ENCODE measurements at regions of chr3 and their contacts with region 1.

Region 1: DNA sequence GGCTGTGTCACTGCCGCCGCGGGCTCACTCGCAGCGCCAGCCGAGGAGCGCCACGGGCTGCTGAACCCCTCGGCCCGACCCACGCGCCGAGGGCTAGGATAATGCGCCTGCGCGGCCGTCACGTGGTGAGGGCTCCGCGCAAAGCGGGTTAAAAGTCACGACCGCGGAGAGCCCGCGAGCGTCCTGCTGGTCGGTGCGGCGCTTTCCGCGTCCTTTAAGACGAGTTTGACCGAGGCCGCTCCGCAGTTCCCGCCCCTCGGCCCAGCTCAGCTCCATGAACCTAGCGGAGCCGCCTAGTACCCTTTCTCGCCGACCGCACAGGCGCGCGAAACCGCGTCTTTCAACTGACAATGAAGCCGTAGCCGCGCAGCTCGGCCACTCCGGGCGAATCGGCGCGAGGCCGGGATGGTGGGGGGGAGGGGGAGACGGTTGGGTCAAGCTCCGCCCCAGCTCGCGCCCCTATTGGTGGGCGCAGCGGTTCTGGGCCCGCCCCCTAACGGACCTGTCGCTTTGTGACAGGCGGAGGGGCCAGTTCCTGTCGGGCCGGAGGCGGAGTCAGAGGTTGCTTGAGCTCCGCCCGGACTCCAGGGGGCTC is 636 bp upstream of the STT3B start:
- DNase-seq: peak; percentile 99
- ATAC-seq: peak; percentile 87
- H3K4me3 ChIP-seq: peak overlapping the region; percentile 98
- H3K27ac ChIP-seq: peak overlapping the region; percentile 96
- H3K4me1 ChIP-seq: peaks cover 28% of the 10 kb centered on the region
- H3K27me3 ChIP-seq: no peaks in the 10 kb centered on the region
- CTCF ChIP-seq: no peak

Region 2: DNA sequence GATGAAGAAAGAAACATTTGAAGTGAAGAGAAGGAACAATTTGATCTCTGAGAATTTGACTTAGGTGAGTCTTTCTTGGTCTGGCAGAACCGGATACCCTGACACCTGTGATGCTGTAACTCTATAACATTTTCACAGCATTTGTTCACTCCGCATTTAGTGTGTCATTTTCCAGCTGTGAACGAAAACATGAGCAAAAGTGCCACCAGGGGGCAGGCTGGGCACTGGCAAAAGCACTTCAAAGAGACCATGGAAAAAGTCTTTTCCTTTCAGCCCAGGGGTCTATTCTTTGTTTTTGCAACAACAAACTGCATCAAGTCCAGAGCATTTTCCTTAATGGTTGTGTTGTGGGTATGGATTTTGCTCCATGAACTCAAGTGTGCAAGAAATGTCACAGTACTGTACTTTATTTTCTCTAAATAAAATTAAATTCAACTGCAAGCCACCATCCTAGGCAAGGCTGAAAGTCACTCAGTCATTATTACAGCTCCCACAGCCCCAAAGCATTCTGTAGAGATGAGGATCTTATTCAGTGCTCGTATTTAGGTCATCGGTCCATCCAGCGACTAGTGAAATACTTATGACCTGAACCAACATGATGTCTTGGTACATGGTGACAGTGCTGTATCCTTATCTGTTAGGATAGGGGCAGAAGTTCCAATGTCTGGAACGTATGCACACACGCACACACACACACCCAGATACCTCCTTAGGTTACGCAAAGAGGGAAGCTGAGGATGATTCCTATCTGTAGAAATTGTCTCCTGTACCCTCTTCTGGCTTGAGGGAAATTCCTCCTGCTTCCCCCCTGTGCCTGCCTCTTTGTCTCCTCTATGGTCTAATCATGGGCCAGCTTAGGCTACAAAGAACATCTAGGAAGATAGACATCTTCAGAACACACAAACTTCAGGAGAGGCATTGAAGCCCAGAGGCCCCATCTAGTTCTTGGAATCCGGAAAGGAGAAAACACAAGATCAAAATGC is 763.1 kb before region 1 on chr3:
- CTCF ChIA-PET with region 1: no interaction called
- POLR2A ChIA-PET with region 1: interaction called, 6 read pairs
- intact Hi-C with region 1: loop called (anchors 5 kb)
- DNase-seq: peak; percentile 87
- ATAC-seq: 0 out of 2 replicates have a peak, but pooled peaks have one; percentile 23
- H3K4me3 ChIP-seq: no peak overlapping the region
- H3K27ac ChIP-seq: no peak overlapping the region
- H3K4me1 ChIP-seq: peaks cover 34% of the 10 kb centered on the region
- H3K27me3 ChIP-seq: no peaks in the 10 kb centered on the region
- CTCF ChIP-seq: peak; percentile 96

Region 3: DNA sequence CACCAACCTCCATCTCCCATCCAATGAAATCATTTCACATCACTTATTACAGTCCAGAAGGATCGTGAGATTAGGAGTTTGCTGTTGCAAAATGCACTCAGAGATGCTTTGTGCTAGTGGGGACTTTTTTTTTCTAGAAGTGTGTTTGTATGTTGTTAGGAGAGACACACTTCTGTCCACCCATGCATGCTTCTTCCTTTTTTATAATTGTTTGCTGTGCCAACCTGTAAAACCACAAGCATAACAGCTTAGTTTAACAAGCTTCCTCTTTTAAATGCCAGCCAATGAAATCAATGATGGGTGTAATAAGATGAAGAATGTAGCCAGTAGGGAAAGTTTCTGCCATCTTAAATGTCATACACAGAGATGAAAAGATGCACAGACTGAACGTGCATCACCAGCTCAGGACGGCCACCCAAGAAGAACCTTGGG is 304.9 kb before region 1 on chr3:
- CTCF ChIA-PET with region 1: no interaction called
- POLR2A ChIA-PET with region 1: no interaction called
- intact Hi-C with region 1: loop called (anchors 5 kb)
- DNase-seq: peak; percentile 41
- ATAC-seq: peak; percentile 53
- H3K4me3 ChIP-seq: no peak overlapping the region
- H3K27ac ChIP-seq: no peak overlapping the region
- H3K4me1 ChIP-seq: no peaks in the 10 kb centered on the region
- H3K27me3 ChIP-seq: no peaks in the 10 kb centered on the region
- CTCF ChIP-seq: no peak

Region 4: DNA sequence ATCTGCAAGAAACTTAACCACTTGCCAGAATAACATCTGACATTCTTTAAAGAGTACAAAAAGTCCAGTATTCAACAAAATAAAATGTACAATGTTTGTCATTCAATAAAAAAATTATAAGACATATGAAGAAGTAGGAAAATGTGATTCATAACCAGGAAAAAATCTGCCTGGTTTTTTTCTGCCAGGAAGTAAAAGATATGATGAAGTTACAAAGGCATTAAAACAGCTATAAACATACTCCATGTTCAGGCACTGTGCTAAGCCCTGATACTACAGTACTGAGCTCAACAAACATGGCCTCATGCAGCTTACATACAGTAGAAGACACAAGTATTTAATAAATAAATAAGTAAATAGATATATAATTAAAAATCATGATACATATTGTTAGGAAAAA is 177.7 kb before region 1 on chr3:
- CTCF ChIA-PET with region 1: no interaction called
- POLR2A ChIA-PET with region 1: no interaction called
- intact Hi-C with region 1: loop called (anchors 5 kb)
- DNase-seq: peak; percentile 38
- ATAC-seq: peak; percentile 83
- H3K4me3 ChIP-seq: no peak overlapping the region
- H3K27ac ChIP-seq: no peak overlapping the region
- H3K4me1 ChIP-seq: peaks cover 5% of the 10 kb centered on the region; the same call in 1 of the 2 replicates
- H3K27me3 ChIP-seq: no peaks in the 10 kb centered on the region
- CTCF ChIP-seq: no peak

Region 5: GRCh38 chr3:31968927-31969418 is 436.9 kb after region 1 on chr3:
- CTCF ChIA-PET with region 1: no interaction called
- POLR2A ChIA-PET with region 1: no interaction called
- intact Hi-C with region 1: loop called (anchors 5 kb)
- DNase-seq: peak; percentile 97
- ATAC-seq: peak; percentile 90
- H3K4me3 ChIP-seq: peak overlapping the region; percentile 52
- H3K27ac ChIP-seq: peak overlapping the region; percentile 92
- H3K4me1 ChIP-seq: peaks cover 45% of the 10 kb centered on the region
- H3K27me3 ChIP-seq: no peaks in the 10 kb centered on the region
- CTCF ChIP-seq: no peak

Measured in PC-3 (cell line).